ENCODE measurements at regions of chr5 and their contacts with region 1.

Region 1: DNA sequence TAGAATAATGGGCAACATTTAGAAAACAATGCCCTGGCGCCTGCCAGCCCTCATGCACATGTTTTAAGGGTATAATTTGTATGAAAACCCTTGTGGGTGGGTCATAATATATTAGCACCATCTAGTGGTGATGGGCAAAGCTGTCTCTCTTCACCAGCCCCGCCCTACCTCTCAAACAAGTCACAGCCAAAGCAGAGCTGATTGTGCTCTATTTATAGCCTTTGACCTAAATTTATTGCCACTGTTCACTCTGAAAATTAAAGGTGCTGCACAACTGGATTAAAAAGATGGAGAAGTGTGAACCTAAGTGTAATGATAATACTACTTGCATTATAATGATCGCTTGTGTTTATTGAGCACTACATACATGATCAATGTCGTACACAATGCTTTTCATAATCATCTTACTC is 131.9 kb upstream of the ANKH start:
- DNase-seq: peak; percentile 66
- H3K4me3 Mint-ChIP-seq: no peak overlapping the region
- H3K27ac Mint-ChIP-seq: no peak overlapping the region
- H3K4me1 Mint-ChIP-seq: peaks cover 21% of the 10 kb centered on the region
- H3K27me3 Mint-ChIP-seq: peaks cover 24% of the 10 kb centered on the region

Region 2: GRCh38 chr5:14685757-14686156 is 317.8 kb before region 1 on chr5:
- CTCF ChIA-PET with region 1: interaction called, 31 read pairs
- DNase-seq: peak; percentile 57
- H3K4me3 Mint-ChIP-seq: no peak overlapping the region
- H3K27ac Mint-ChIP-seq: peak overlapping the region; percentile 71
- H3K4me1 Mint-ChIP-seq: peaks cover 13% of the 10 kb centered on the region
- H3K27me3 Mint-ChIP-seq: no peaks in the 10 kb centered on the region

Region 3: GRCh38 chr5:14727428-14727865 is 276.1 kb before region 1 on chr5:
- CTCF ChIA-PET with region 1: interaction called, 153 read pairs
- DNase-seq: peak; percentile 80
- H3K4me3 Mint-ChIP-seq: no peak overlapping the region
- H3K27ac Mint-ChIP-seq: no peak overlapping the region
- H3K4me1 Mint-ChIP-seq: peaks cover 4% of the 10 kb centered on the region
- H3K27me3 Mint-ChIP-seq: no peaks in the 10 kb centered on the region

Region 4: DNA sequence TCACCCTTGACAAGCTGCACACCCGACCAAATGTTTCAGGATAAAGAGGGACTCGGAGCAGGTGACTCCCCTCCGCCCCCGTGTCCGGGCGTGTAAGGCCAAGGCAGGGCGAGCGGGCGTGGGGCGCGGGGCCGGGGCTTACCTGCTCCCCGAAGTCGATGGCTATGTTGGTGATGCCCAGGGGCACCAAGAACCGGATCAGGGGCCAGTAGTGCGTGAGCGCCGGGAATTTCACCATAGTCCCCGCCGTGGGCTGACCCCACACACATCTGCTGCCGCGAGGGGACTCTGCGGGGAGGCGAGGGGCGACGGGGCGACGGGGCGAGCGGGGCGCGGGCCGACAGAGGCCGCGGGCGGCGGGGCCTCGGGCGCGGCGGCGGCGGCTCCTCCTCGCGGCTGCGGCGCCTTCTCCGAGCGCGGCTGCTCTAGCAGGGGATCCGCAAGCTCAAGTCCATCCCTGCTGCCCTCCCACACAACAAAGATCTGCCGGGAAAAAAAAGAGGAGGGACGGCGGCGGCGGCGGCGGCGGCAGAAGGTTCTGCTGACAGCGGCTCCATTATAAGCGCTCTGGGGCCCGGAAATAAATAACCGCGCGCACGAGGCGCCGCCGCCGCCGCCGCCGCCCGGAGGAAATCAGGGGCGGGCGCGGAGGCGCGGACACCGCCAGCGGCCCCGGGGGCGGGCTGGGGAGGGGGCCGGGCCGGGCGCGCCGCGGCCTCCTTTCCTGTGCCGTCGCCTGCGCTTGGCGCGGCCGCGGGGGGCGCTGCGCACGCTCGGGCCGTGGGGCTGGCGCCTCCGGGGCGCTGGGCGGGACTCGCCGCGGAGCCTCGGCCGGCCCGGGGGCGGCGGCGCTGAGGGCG is 132.1 kb before region 1 on chr5 and contains the start of gene ANKH:
- CTCF ChIA-PET with region 1: interaction called, 10 read pairs
- DNase-seq: peak; percentile 85
- H3K4me3 Mint-ChIP-seq: peak within 1 kb of the TSS; percentile 92
- H3K27ac Mint-ChIP-seq: peak within 1 kb of the TSS; percentile 91
- H3K4me1 Mint-ChIP-seq: peaks cover 33% of the 10 kb centered on the region
- H3K27me3 Mint-ChIP-seq: no peaks in the 10 kb centered on the region

Region 5: GRCh38 chr5:14895301-14895700 is 108.2 kb before region 1 on chr5:
- CTCF ChIA-PET with region 1: no interaction called
- DNase-seq: no peak
- H3K4me3 Mint-ChIP-seq: no peak overlapping the region
- H3K27ac Mint-ChIP-seq: no peak overlapping the region
- H3K4me1 Mint-ChIP-seq: no peaks in the 10 kb centered on the region
- H3K27me3 Mint-ChIP-seq: peaks cover 6% of the 10 kb centered on the region

Region 6: GRCh38 chr5:14946815-14947640 is 56.5 kb before region 1 on chr5:
- CTCF ChIA-PET with region 1: interaction called, 10 read pairs
- DNase-seq: peak; percentile 46
- H3K4me3 Mint-ChIP-seq: no peak overlapping the region
- H3K27ac Mint-ChIP-seq: no peak overlapping the region
- H3K4me1 Mint-ChIP-seq: peaks cover 5% of the 10 kb centered on the region
- H3K27me3 Mint-ChIP-seq: peaks cover 4% of the 10 kb centered on the region

Region 7: GRCh38 chr5:14956413-14957046 is 47.0 kb before region 1 on chr5:
- CTCF ChIA-PET with region 1: interaction called, 19 read pairs
- DNase-seq: no peak
- H3K4me3 Mint-ChIP-seq: no peak overlapping the region
- H3K27ac Mint-ChIP-seq: no peak overlapping the region
- H3K4me1 Mint-ChIP-seq: no peaks in the 10 kb centered on the region
- H3K27me3 Mint-ChIP-seq: peaks cover 13% of the 10 kb centered on the region

Region 8: DNA sequence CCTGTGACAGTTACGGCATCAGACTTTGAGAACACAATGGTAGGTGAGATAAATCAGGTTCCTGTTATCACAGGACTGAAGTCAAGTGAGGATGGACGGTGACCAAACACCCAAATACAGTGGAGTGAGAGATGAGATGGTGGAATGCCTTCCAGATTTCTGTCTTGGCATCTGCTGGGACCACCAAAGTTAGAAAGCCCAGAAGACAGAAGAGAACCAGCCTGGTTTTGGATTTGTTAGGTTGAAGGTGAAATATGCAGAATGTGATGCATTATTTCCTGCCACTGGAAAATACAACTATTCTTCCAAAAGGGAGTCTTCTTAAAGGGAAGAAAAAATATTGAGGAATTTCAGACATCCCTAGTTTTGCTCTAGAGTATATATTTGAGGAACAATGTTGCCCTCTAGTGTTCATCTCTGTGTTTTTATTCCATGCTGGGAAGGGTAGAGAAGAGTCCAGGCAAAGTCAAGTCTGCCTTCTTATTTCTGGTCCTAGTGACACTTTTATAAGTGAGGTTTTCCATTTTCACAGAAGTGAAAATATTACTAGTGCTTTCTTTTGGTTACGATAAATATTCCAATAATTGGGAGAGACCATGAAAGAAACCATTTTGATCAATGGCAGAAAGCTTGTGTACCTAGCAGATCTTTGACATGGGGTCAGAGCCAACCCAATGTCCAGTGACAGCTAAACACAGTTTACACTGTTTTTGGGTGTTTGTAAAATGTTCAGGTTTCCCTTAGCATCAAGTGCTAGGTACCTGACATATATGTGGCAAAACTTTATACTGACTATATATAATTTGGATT is 10.3 kb after region 1 on chr5:
- CTCF ChIA-PET with region 1: interaction called, 13 read pairs
- DNase-seq: no peak
- H3K4me3 Mint-ChIP-seq: no peak overlapping the region
- H3K27ac Mint-ChIP-seq: no peak overlapping the region
- H3K4me1 Mint-ChIP-seq: no peaks in the 10 kb centered on the region
- H3K27me3 Mint-ChIP-seq: peaks cover 6% of the 10 kb centered on the region

Region 9: GRCh38 chr5:15215056-15215455 is 211.5 kb after region 1 on chr5:
- CTCF ChIA-PET with region 1: no interaction called
- DNase-seq: no peak
- H3K4me3 Mint-ChIP-seq: no peak overlapping the region
- H3K27ac Mint-ChIP-seq: no peak overlapping the region
- H3K4me1 Mint-ChIP-seq: no peaks in the 10 kb centered on the region
- H3K27me3 Mint-ChIP-seq: no peaks in the 10 kb centered on the region